Activated CD4-positive, alpha-beta T cell treated with anti-CD3 and anti-CD28 coated beads for 36 hours (primary cell): ENCODE measurements at regions of chr2 and their contacts with region 1.

Region 1: GRCh38 chr2:118088051-118089024 is at the start of gene INSIG2:
- DNase-seq: peak; percentile 97
- ATAC-seq: peak; percentile 89
- H3K4me3 Mint-ChIP-seq: peak within 1 kb of the TSS; percentile 88
- H3K27ac Mint-ChIP-seq: peak within 1 kb of the TSS; percentile 88
- H3K4me1 Mint-ChIP-seq: peaks cover 19% of the 10 kb centered on the region
- H3K27me3 Mint-ChIP-seq: peaks cover 8% of the 10 kb centered on the region
- total RNA-seq, gene INSIG2: 23.5 to 56.4 TPM

Region 2: GRCh38 chr2:118013724-118014491 is 74.4 kb before region 1 on chr2 and contains the start of gene CCDC93:
- CTCF ChIA-PET with region 1: interaction called, 4 read pairs
- POLR2A ChIA-PET with region 1: interaction called, 3 read pairs
- intact Hi-C with region 1: loop called (anchors 1 kb)
- DNase-seq: peak; percentile 90
- ATAC-seq: peak; percentile 89
- H3K4me3 Mint-ChIP-seq: peak within 1 kb of the TSS; percentile 85
- H3K27ac Mint-ChIP-seq: peak within 1 kb of the TSS; percentile 87
- H3K4me1 Mint-ChIP-seq: peaks cover 42% of the 10 kb centered on the region
- H3K27me3 Mint-ChIP-seq: no peaks in the 10 kb centered on the region
- total RNA-seq, gene CCDC93: 26.2 to 39.5 TPM

Region 3: DNA sequence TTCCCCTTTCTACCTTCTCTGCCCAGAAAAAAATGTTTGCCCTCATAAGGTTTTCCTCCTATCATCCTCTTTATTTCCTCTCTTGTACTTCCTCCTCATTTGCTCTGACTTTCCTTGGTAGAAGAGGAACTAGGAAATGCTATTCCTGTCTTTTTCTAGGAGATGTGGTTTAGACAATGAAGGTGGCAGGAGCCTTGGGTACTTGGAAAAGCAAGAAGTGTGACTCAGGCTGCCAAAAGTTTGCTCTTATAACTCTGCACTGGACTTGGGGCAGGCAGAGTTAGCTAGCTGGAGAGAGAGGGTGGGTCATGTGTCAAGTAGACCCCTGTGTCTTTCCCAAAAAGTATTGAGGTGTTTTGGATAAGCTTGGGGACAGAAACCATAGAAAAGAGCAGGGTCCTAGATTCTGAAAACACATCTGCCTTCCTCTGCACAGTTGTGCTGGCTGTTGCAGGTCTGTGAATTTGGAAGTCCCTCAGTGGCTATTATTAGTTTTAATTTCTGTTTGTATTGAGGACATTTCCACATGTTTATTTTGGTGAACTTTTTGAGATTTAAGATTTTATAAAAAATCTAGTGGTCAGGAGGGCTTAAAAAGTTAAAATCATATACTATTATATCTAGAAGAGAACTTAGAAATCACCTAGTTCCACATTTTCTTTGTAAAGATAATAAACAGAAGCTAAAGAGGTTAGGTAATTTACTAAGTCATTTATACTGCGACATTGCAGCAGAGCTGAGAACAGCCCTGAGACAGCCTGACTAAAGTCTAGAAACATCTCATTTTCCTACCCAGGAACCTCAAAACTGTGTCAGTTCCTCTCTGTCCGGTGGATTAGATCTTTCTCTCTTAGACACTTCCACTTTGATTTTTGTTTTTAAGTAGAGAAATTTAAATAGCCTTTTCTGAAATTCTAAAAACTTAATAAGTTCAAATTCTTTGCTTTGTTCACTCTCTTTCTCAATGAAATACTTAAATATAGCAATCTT is 15.9 kb after region 1 on chr2:
- CTCF ChIA-PET with region 1: no interaction called
- POLR2A ChIA-PET with region 1: interaction called, 3 read pairs
- intact Hi-C with region 1: loop called in 1 of 2 experiments (anchors 2 kb)
- DNase-seq: no peak
- ATAC-seq: peak; percentile 78
- H3K4me3 Mint-ChIP-seq: no peak overlapping the region
- H3K27ac Mint-ChIP-seq: no peak overlapping the region
- H3K4me1 Mint-ChIP-seq: peaks cover 34% of the 10 kb centered on the region
- H3K27me3 Mint-ChIP-seq: no peaks in the 10 kb centered on the region

Region 4: GRCh38 chr2:118122594-118123281 is 34.4 kb after region 1 on chr2:
- CTCF ChIA-PET with region 1: no interaction called
- POLR2A ChIA-PET with region 1: no interaction called
- intact Hi-C with region 1: no loop called
- DNase-seq: no peak
- ATAC-seq: no peak
- H3K4me3 Mint-ChIP-seq: no peak overlapping the region
- H3K27ac Mint-ChIP-seq: no peak overlapping the region
- H3K4me1 Mint-ChIP-seq: peaks cover 2% of the 10 kb centered on the region
- H3K27me3 Mint-ChIP-seq: peaks cover 8% of the 10 kb centered on the region

Region 5: GRCh38 chr2:118148809-118149208 is 60.5 kb after region 1 on chr2:
- CTCF ChIA-PET with region 1: interaction called, 4 read pairs
- POLR2A ChIA-PET with region 1: no interaction called
- intact Hi-C with region 1: loop called in 1 of 2 experiments (anchors 2 kb)
- DNase-seq: no peak
- ATAC-seq: no peak
- H3K4me3 Mint-ChIP-seq: no peak overlapping the region
- H3K27ac Mint-ChIP-seq: no peak overlapping the region
- H3K4me1 Mint-ChIP-seq: peaks cover 6% of the 10 kb centered on the region
- H3K27me3 Mint-ChIP-seq: peaks cover 11% of the 10 kb centered on the region

Region 6: GRCh38 chr2:118186110-118186857 is 97.9 kb after region 1 on chr2:
- CTCF ChIA-PET with region 1: interaction called, 3 read pairs
- POLR2A ChIA-PET with region 1: interaction called, 5 read pairs
- intact Hi-C with region 1: loop called (anchors 1 to 2 kb)
- DNase-seq: peak; percentile 94
- ATAC-seq: peak; percentile 91
- H3K4me3 Mint-ChIP-seq: peak overlapping the region; percentile 87
- H3K27ac Mint-ChIP-seq: peak overlapping the region; percentile 98
- H3K4me1 Mint-ChIP-seq: peaks cover 14% of the 10 kb centered on the region
- H3K27me3 Mint-ChIP-seq: no peaks in the 10 kb centered on the region

Region 7: GRCh38 chr2:119366649-119367471 is 1278.5 kb after region 1 on chr2 and contains the starts of genes C2orf76 and DBI:
- CTCF ChIA-PET with region 1: no interaction called
- POLR2A ChIA-PET with region 1: no interaction called
- intact Hi-C with region 1: loop called in 1 of 2 experiments (anchors 10 kb)
- DNase-seq: peak; percentile 96
- ATAC-seq: peak; percentile 95
- H3K4me3 Mint-ChIP-seq: peak within 1 kb of the TSS; percentile 92
- H3K27ac Mint-ChIP-seq: peak within 1 kb of the TSS; percentile 95
- H3K4me1 Mint-ChIP-seq: peaks cover 36% of the 10 kb centered on the region
- H3K27me3 Mint-ChIP-seq: no peaks in the 10 kb centered on the region
- total RNA-seq, gene C2orf76: 8.9 to 9.9 TPM
- total RNA-seq, gene DBI: 123 to 151 TPM